ENCODE measurements at regions of chr9 and their contacts with region 1.

Region 1: GRCh38 chr9:19230356-19231125 is at the start of gene DENND4C:
- DNase-seq: peak; percentile 83
- H3K4me3 Mint-ChIP-seq: peak within 1 kb of the TSS; percentile 77
- H3K27ac Mint-ChIP-seq: peak within 1 kb of the TSS; percentile 73
- H3K4me1 Mint-ChIP-seq: peaks cover 8% of the 10 kb centered on the region
- H3K27me3 Mint-ChIP-seq: no peaks in the 10 kb centered on the region
- total RNA-seq, gene DENND4C: 18.4 and 21.1 TPM in 2 replicates

Region 2: DNA sequence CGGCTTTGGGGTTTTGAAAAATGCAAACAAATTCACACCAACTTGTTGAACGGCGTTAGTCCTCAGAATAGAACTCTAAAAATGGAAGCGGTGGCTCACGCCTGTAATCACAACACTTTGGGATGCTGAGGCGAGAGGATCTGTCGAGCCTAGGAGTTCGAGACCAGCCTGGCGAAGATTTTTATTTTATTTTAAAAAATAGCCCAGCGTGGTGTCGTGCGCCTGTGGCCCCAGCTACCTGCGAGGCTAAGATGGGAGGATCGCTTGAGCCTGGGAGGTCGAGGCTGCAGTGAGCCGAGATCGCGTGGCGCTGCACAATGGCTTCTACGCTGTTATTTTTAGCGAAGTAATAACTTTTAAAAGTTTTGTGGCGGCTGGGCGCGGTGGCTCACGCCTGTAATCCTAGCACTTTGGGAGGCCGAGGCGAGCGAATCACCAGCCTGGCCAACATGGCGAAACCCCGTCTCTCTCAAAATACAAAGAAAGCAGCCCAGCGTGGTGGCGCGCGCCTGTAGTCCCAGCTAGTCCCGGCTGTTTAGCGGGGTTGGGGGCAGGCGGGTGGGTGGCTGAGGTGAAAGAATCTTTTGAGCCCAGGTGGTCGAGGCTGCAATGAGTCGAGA is 102.5 kb before region 1 on chr9:
- intact Hi-C with region 1: loop called (anchors 1 kb)
- DNase-seq: peak; percentile 18
- H3K4me3 Mint-ChIP-seq: peak overlapping the region; percentile 92
- H3K27ac Mint-ChIP-seq: peak overlapping the region; percentile 89
- H3K4me1 Mint-ChIP-seq: peaks cover 53% of the 10 kb centered on the region
- H3K27me3 Mint-ChIP-seq: no peaks in the 10 kb centered on the region

Region 3: GRCh38 chr9:19184144-19184917 is 46.2 kb before region 1 on chr9:
- intact Hi-C with region 1: loop called (anchors 1 kb)
- DNase-seq: peak; percentile 72
- H3K4me3 Mint-ChIP-seq: peak overlapping the region; percentile 67
- H3K27ac Mint-ChIP-seq: peak overlapping the region; percentile 89
- H3K4me1 Mint-ChIP-seq: peaks cover 18% of the 10 kb centered on the region
- H3K27me3 Mint-ChIP-seq: no peaks in the 10 kb centered on the region

Region 4: DNA sequence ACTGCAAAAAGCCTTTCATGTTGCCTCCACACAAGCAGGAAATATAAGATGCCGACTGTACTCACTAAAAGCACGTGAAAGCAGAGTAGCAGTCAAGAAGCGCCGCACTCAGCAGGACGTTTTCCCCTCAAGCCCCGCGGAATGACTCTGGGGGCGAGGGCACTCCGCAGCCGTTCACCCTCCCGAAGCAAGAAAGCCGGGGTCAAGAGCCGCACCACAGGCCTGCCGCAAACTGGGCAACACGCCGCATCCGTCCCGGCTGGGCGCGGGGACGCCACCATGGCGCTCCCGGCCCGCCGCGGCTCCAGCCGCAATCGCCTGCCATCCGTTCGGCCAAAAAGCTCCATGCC is 149.1 kb after region 1 on chr9:
- intact Hi-C with region 1: loop called (anchors 1 kb)
- DNase-seq: no peak
- H3K4me3 Mint-ChIP-seq: peak overlapping the region; percentile 98
- H3K27ac Mint-ChIP-seq: peak overlapping the region; percentile 98
- H3K4me1 Mint-ChIP-seq: peaks cover 61% of the 10 kb centered on the region
- H3K27me3 Mint-ChIP-seq: no peaks in the 10 kb centered on the region

Region 5: DNA sequence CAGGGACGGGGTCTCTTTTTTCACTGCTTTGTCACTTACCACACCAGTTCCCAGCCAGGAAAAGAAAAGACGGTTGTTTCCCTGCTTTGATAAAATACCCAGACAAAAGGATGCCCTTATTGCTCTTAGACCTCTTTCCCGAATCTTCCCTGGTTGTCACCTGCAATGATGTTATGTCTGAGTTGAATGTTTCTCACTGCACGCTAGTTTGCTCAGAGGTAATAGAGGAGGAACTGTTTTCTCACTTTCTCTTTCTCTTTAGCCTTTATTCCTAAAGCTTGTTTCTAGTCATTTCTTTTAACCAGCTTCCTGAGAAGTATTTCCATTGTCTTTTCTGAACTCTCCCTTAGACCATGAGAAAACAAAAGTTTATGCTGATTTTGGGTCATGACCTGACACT is 211.2 kb after region 1 on chr9:
- intact Hi-C with region 1: loop called (anchors 5 kb)
- DNase-seq: no peak
- H3K4me3 Mint-ChIP-seq: peak overlapping the region; percentile 48
- H3K27ac Mint-ChIP-seq: peak overlapping the region; percentile 80
- H3K4me1 Mint-ChIP-seq: peaks cover 14% of the 10 kb centered on the region
- H3K27me3 Mint-ChIP-seq: no peaks in the 10 kb centered on the region

Measured in activated T-helper 1 cell treated with anti-CD3 and anti-CD28 coated beads, Interleukin-12 subunit alpha, Interleukin-12 subunit beta, Interleukin-2, Interleukin-4 antibody, amounts not matched to agents 30 ng/mL and 10 ng/mL and 1 ng/mL, durations not matched to agents 14 hours and 24 hours and 36 hours (primary cell).